ENCODE measurements at regions of chr9 and their contacts with region 1.

Region 1: DNA sequence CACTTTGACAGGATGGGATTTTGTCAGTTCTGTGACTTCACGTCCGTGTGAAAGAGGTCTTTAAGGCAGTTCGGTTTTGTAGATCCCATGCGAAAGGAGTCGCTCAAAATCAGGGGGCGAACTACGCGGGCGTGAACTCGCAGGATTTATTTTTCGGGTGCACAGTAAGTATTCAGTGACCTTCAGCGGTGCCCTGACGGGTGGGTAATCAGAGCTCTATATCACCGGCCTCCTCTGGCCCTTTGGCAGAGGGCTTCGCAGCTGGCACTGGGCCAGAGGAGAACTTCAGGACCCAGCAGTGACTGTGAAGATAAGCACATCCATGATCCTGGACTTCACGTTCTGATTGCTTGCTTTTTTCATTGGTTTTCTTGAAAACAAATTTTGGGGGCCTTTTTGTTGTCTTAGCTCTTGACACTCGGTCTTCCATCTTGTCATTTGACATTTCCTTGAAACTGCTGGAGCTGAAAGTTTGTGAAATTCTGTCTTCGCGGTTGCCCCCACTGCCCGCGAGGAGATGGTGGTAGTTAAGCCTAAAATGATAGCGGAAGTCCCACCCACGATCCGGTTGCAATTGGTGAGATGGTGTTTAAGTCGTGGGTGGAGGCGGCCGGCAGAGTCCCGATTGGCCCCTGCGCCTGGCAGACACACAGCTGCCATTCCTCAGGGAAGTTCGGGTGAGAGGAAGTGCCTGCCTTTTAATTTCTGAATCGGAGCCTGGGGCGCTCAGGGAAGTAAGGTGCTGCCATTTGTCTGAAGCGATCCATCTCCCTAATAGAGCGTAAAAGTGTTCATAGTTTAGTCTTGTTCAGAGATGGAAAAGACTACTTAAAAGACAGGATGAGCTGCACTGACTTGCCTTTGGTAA is at the start of gene FAM120AOS:
- DNase-seq: peak; percentile 76
- H3K4me3 ChIP-seq: peak within 1 kb of the TSS; percentile 84
- CTCF ChIP-seq: no peak

Region 2: GRCh38 chr9:93173365-93174051 is 279.8 kb before region 1 on chr9:
- CTCF ChIA-PET with region 1: no interaction called
- POLR2A ChIA-PET with region 1: no interaction called
- DNase-seq: no peak
- H3K4me3 ChIP-seq: no peak overlapping the region
- CTCF ChIP-seq: no peak

Region 3: GRCh38 chr9:93468763-93469456 is 15.6 kb after region 1 on chr9:
- CTCF ChIA-PET with region 1: interaction called, 24 read pairs
- POLR2A ChIA-PET with region 1: interaction called, 3 read pairs
- DNase-seq: no peak
- H3K4me3 ChIP-seq: no peak overlapping the region; the same call in 1 of the 2 replicates
- CTCF ChIP-seq: no peak